ENCODE measurements at regions of chr22 and their contacts with region 1.

Region 1: GRCh38 chr22:40183029-40183581 is 5.4 kb downstream of the TNRC6B start:
- DNase-seq: no peak
- H3K4me3 ChIP-seq: no peak overlapping the region
- H3K27ac ChIP-seq: peak overlapping the region; percentile 52
- H3K4me1 ChIP-seq: peaks cover 8% of the 10 kb centered on the region
- H3K27me3 ChIP-seq: no peaks in the 10 kb centered on the region
- CTCF ChIP-seq: no peak

Region 2: GRCh38 chr22:40009292-40009769 is 173.8 kb before region 1 on chr22:
- intact Hi-C with region 1: no loop called
- DNase-seq: peak; percentile 59
- H3K4me3 ChIP-seq: no peak overlapping the region
- H3K27ac ChIP-seq: no peak overlapping the region
- H3K4me1 ChIP-seq: no peaks in the 10 kb centered on the region
- H3K27me3 ChIP-seq: no peaks in the 10 kb centered on the region
- CTCF ChIP-seq: no peak

Region 3: DNA sequence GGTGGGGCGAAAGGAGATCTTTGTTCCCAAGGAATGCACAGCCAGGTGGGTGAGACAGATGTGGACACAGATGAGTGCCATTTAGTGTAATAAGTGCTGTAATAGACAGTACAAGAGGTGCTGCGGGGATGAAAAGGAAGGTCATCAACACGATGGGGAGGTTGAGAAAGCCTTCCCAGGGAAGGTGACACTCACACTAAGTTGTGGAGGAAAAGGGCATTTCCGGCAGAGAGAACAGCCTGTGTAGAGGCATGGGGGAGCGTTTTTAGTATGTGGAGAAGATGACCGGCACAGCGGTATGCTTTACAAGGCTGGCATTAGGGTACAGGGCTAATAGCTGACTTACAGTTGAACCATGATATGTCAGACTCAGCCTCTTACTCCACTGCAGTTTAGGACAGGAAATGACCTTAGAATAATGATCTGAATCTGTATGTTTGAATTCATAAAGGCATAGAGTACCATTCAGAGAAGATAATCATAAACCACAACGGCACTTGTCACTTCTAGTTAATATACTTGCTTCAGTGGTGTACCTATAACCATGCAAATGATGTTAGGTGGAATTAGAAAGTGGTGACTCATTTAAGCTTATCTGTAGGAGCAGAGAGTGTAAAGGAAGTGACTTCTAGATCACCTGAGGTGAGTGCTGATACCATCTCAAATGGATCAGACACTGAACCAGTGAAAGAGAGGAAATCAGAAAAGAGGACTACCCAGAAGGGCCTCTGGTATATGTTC is 127.8 kb before region 1 on chr22:
- intact Hi-C with region 1: loop called (anchors 10 kb)
- DNase-seq: no peak
- H3K4me3 ChIP-seq: no peak overlapping the region
- H3K27ac ChIP-seq: no peak overlapping the region
- H3K4me1 ChIP-seq: no peaks in the 10 kb centered on the region
- H3K27me3 ChIP-seq: no peaks in the 10 kb centered on the region
- CTCF ChIP-seq: no peak